Heart left ventricle (tissue), 16 donors: ENCODE measurements at regions of chr11 and their contacts with region 1.

Region 1: DNA sequence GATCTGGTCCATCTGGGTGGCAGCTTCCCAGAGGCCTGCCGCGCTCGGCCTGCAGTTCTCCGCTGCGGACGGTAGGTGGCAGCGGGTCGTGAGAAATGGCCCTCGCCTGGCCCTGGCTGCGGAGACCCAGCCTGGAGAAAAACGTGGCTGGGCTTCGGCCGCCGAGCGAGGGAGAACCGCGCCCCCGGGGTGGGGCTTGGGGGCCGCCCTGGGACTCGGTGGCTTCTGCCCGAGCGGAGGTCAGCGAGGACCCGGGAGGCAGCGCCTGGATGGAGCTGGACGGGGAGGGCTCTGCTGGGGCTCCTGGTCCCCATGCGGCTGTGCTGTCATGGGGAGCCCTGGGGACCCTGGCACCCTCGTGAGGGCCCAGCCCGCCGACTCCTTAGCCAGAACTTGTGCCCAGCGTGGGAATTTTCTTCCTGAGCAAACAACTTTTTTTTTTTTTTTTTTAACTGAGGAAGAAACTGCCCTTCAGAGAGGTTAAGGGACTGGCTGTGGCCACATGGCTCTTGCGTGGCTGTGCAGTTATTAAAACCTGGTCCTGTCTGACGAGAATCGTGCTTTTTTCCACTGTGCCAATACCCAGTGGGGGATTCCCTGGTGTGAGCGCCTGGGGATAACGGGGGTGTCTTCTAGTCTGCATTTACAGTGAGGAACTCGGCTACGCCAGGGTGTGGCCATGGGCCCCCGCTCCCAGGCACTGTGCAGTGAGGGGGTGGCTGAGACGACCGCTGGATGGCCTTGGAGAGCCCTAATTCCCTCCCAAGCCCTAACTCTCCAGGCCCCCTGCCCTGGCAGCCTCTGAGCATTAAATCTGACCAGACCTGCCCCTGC is 535.6 kb downstream of the INSC start:
- DNase-seq: peak; percentile 95 to 98 (median 96)
- ATAC-seq: peak; percentile 97 to 100 (median 99)
- H3K4me3 ChIP-seq: peak overlapping the region in 10 of 12 donors; percentile 29 to 57 (median 44)
- H3K27ac ChIP-seq: peak overlapping the region; percentile 26 to 84 (median 76)
- H3K4me1 ChIP-seq: peaks cover 0 to 28% (median 17%) of the 10 kb centered on the region in 12 donors
- H3K27me3 ChIP-seq: peaks cover 0 to 16% (median 0%) of the 10 kb centered on the region in 9 donors
- CTCF ChIP-seq: peak; percentile 96 to 100 (median 99)
- POLR2A ChIP-seq: peak in 1 of 2 donors; percentile 13

Region 2: DNA sequence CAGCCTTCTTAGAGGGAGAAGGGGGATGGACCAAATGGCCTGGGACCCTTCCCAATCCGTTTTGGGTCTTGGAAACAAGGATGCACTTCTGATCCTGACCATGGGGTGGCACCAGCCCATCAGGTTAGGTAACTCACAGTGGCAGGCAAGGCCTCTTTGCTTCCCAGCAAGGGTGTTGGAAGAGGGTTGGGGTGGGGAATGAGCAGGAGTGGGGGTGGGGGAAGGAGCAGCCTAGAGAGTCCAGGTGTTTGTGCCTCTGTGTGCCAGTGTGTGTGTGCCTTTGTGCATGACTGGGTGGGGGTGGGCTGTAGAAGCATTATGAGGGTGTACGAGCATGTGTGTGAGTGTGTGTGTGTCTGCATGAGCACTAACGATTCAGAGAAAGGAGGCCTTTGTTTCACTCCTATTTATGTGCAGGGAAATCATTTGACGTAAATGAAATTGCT is 322.5 kb before region 1 on chr11:
- intact Hi-C with region 1: loop called in 9 of 10 experiments (anchors 2 to 10 kb)
- DNase-seq: peak; percentile 53 to 64 (median 58)
- ATAC-seq: peak; percentile 76 to 89 (median 84)
- H3K4me3 ChIP-seq: no peak overlapping the region
- H3K27ac ChIP-seq: no peak overlapping the region
- H3K4me1 ChIP-seq: no peaks in the 10 kb centered on the region
- H3K27me3 ChIP-seq: no peaks in the 10 kb centered on the region
- CTCF ChIP-seq: peak; percentile 43 to 76 (median 67)
- POLR2A ChIP-seq: no peak

Region 3: GRCh38 chr11:15333407-15333806 is 316.9 kb before region 1 on chr11:
- intact Hi-C with region 1: loop called in 8 of 10 experiments (anchors 5 to 10 kb)
- DNase-seq: no peak
- ATAC-seq: no peak
- H3K4me3 ChIP-seq: no peak overlapping the region
- H3K27ac ChIP-seq: no peak overlapping the region
- H3K4me1 ChIP-seq: no peaks in the 10 kb centered on the region
- H3K27me3 ChIP-seq: peaks cover 0 to 3% (median 0%) of the 10 kb centered on the region in 9 donors
- CTCF ChIP-seq: no peak
- POLR2A ChIP-seq: no peak

Region 4: GRCh38 chr11:15793043-15793996 is 143.0 kb after region 1 on chr11:
- intact Hi-C with region 1: loop called in 1 of 10 experiments (anchors 10 kb)
- DNase-seq: no peak
- ATAC-seq: peak; percentile 89 to 96 (median 92)
- H3K4me3 ChIP-seq: no peak overlapping the region
- H3K27ac ChIP-seq: peak overlapping the region in 11 of 12 donors; percentile 13 to 82 (median 57)
- H3K4me1 ChIP-seq: peaks cover 0 to 5% (median 0%) of the 10 kb centered on the region in 12 donors
- H3K27me3 ChIP-seq: no peaks in the 10 kb centered on the region
- CTCF ChIP-seq: no peak
- POLR2A ChIP-seq: no peak

Region 5: GRCh38 chr11:15819679-15820286 is 169.5 kb after region 1 on chr11:
- intact Hi-C with region 1: loop called in 8 of 10 experiments (anchors 2 to 10 kb)
- DNase-seq: peak; percentile 76 to 88 (median 81)
- ATAC-seq: peak; percentile 85 to 93 (median 88)
- H3K4me3 ChIP-seq: no peak overlapping the region
- H3K27ac ChIP-seq: peak overlapping the region in 3 of 12 donors; percentile 17 to 55 (median 52)
- H3K4me1 ChIP-seq: peaks cover 0 to 53% (median 45%) of the 10 kb centered on the region in 12 donors
- H3K27me3 ChIP-seq: no peaks in the 10 kb centered on the region
- CTCF ChIP-seq: peak; percentile 85 to 96 (median 88)
- POLR2A ChIP-seq: no peak

Region 6: GRCh38 chr11:16184588-16184987 is 534.3 kb after region 1 on chr11:
- intact Hi-C with region 1: loop called in 1 of 10 experiments (anchors 10 kb)
- DNase-seq: no peak
- ATAC-seq: peak in 2 of 4 donors; percentile 27 to 31
- H3K4me3 ChIP-seq: no peak overlapping the region
- H3K27ac ChIP-seq: no peak overlapping the region
- H3K4me1 ChIP-seq: peaks cover 0 to 9% (median 3%) of the 10 kb centered on the region in 12 donors
- H3K27me3 ChIP-seq: no peaks in the 10 kb centered on the region
- CTCF ChIP-seq: no peak
- POLR2A ChIP-seq: no peak

Region 7: DNA sequence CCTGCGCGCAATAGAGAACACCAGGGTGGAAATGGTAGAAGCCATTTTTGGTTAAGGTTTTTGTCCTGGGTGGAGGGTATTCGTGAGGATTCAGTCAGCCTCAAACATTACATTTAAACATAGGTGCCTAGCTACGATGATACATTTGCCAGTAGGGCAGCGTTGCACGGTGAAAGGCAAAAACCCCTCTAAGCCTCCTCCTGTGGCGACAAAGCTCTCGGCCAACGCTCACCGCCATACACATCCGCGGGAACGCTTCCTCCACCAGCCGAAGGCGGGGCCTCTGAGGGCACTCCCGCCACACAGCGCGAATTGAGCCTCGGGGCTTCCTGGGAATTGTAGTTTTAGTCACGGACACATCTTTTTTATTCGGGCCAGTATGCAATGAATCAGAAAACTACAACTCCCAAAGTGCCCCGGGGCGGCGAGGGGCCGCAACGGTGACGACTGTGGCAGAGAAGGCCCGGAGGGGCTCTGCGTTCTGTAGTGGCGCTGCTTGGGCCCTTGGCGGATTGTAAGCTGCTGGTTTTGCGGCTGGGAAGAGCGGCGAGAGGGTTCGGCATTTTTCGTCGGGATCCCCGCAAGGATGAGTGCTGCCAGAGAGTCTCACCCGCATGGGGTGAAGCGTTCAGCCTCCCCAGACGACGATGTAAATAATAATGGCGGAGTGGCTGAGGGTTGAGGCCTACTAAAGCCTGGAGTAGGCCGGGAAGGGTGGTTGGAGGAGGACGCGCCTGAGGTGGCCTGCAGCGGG is 1088.0 kb after region 1 on chr11 and contains the start of gene C11orf58:
- intact Hi-C with region 1: loop called in 1 of 10 experiments (anchors 5 kb)
- DNase-seq: peak; percentile 96 to 97 (median 96)
- ATAC-seq: peak; percentile 97 to 100 (median 99)
- H3K4me3 ChIP-seq: peak within 1 kb of the TSS; percentile 36 to 94 (median 80)
- H3K27ac ChIP-seq: peak within 1 kb of the TSS; percentile 83 to 98 (median 90)
- H3K4me1 ChIP-seq: peaks cover 4 to 45% (median 36%) of the 10 kb centered on the region in 12 donors
- H3K27me3 ChIP-seq: no peaks in the 10 kb centered on the region
- CTCF ChIP-seq: peak in 1 of 12 donors; percentile 6
- POLR2A ChIP-seq: peak in 1 of 2 donors; percentile 82
- total RNA-seq, gene C11orf58: 88.2 to 130 (median 110) TPM